ENCODE measurements at regions of chr11 and their contacts with region 1.

Region 1: DNA sequence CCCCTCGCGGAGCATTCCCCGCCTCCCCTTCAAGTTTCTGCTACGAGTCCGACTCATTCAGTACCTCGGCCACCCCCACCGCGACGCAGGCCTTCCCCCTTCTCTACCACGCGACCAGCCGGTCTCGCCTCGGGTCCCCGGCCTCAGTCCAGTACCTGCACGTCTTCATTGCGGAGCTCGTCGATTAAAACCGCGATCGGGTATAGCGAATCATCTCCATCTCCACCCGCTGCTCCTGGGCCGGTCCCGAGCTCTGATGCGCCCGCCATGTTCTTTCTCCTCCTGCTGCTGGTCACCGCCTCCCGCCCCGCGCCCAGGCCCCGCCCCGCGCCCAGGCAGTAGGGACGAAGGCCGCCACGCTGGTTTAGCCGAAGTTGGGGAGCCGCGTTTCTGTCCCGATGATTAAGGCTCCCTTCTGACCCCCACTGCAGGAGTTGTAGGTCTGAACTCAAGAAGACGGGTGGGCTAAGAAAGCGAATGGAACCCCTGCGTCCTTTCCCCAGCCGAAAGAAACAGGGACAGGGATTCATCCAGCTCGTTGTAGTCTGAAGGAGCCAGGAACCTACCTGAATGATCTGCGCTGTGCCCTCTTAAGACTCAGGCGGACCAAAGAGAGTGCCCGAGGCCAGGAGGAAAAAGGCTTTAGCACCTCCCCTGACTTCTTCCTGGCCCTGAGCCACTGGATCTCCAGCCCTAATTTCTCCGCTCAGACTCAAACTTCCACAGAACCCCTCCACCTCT is at the start of gene PPP2R1B:
- DNase-seq: peak; percentile 71 to 78 (median 75)
- H3K4me3 ChIP-seq: peak within 1 kb of the TSS; percentile 64 to 92
- H3K4me3 Mint-ChIP-seq: peak within 1 kb of the TSS; percentile 93 to 100 (median 100)
- H3K27ac ChIP-seq: peak within 1 kb of the TSS; percentile 84
- H3K27ac Mint-ChIP-seq: peak within 1 kb of the TSS; percentile 65 to 100 (median 99)
- H3K4me1 ChIP-seq: peaks cover 24% of the 10 kb centered on the region
- H3K4me1 Mint-ChIP-seq: peaks cover 29 to 50% (median 36%) of the 10 kb centered on the region in 4 donors
- H3K27me3 ChIP-seq: no peaks in the 10 kb centered on the region
- H3K27me3 Mint-ChIP-seq: peaks cover 0 to 2% of the 10 kb centered on the region in 2 donors
- total RNA-seq, gene PPP2R1B: 38.9 to 39.1 TPM

Region 2: GRCh38 chr11:111586388-111586831 is 179.9 kb before region 1 on chr11:
- CTCF ChIA-PET with region 1: interaction called, 31 read pairs
- POLR2A ChIA-PET with region 1: interaction called, 6 read pairs
- intact Hi-C with region 1: no loop called
- DNase-seq: peak; percentile 51 to 62 (median 59)
- H3K4me3 ChIP-seq: no peak overlapping the region
- H3K4me3 Mint-ChIP-seq: no peak overlapping the region
- H3K27ac ChIP-seq: no peak overlapping the region
- H3K27ac Mint-ChIP-seq: no peak overlapping the region
- H3K4me1 ChIP-seq: no peaks in the 10 kb centered on the region
- H3K4me1 Mint-ChIP-seq: no peaks in the 10 kb centered on the region
- H3K27me3 ChIP-seq: no peaks in the 10 kb centered on the region
- H3K27me3 Mint-ChIP-seq: peaks cover 1 to 3% of the 10 kb centered on the region in 2 donors

Region 3: DNA sequence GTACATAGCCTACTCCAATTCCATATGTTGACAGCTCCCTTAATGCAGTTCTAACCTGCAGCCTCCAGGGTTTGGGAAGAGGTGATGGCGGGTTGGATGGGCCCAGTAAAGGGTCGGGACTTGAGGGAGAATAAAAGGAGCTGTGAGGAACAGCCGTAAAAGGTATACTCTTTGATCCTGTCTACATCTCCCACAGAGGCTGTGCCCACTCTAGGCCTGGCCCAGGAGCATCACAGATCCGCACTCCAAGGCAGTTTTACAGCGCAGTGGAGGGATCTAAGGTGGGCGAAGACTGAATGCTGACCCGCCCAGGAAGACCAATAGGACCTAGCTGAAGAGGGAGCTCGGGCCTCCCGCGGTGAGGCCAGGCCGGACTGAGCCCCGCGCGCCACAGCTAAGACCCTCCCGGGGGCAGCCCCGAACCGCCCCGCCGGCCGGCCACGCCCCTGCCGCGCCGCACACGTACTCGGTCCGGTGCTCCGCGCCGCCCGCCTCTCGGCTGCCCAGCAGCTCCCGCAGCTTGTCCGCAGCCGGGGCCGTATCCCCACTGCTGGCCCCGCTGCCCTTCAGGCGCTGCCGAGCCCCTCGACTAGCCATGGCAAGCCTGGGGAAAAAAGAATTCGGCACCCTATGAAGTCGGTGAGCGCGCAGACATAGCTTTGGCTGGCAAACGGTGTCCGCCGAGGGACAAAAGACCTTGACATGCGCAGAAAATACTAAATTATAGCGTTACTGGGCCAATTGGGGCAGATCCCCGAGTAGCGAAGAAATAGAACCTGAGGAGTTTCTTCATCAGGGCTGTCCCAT is 104.8 kb after region 1 on chr11 and contains the start of gene ALG9:
- CTCF ChIA-PET with region 1: no interaction called
- POLR2A ChIA-PET with region 1: interaction called, 7 read pairs
- intact Hi-C with region 1: loop called (anchors 5 kb)
- DNase-seq: peak; percentile 88 to 92 (median 88)
- H3K4me3 ChIP-seq: peak within 1 kb of the TSS; percentile 79
- H3K4me3 Mint-ChIP-seq: peak within 1 kb of the TSS; percentile 91 to 96 (median 94)
- H3K27ac ChIP-seq: peak within 1 kb of the TSS; percentile 91
- H3K27ac Mint-ChIP-seq: peak within 1 kb of the TSS; percentile 94 to 98 (median 96)
- H3K4me1 ChIP-seq: peaks cover 22% of the 10 kb centered on the region
- H3K4me1 Mint-ChIP-seq: peaks cover 10 to 37% (median 26%) of the 10 kb centered on the region in 4 donors
- H3K27me3 ChIP-seq: no peaks in the 10 kb centered on the region
- H3K27me3 Mint-ChIP-seq: no peaks in the 10 kb centered on the region
- total RNA-seq, gene ALG9: 28.2 to 28.3 TPM

Region 4: GRCh38 chr11:112554586-112554985 is 788.3 kb after region 1 on chr11:
- CTCF ChIA-PET with region 1: no interaction called
- POLR2A ChIA-PET with region 1: no interaction called
- intact Hi-C with region 1: no loop called
- DNase-seq: no peak
- H3K4me3 ChIP-seq: no peak overlapping the region
- H3K4me3 Mint-ChIP-seq: no peak overlapping the region
- H3K27ac ChIP-seq: no peak overlapping the region
- H3K27ac Mint-ChIP-seq: no peak overlapping the region
- H3K4me1 ChIP-seq: no peaks in the 10 kb centered on the region
- H3K4me1 Mint-ChIP-seq: peaks cover 0 to 6% (median 2%) of the 10 kb centered on the region in 4 donors
- H3K27me3 ChIP-seq: no peaks in the 10 kb centered on the region
- H3K27me3 Mint-ChIP-seq: peaks cover 3 to 4% of the 10 kb centered on the region in 2 donors

Measured in CD4-positive, alpha-beta memory T cell (primary cell).